ENCODE measurements at regions of chr6 and their contacts with region 1.

Region 1: DNA sequence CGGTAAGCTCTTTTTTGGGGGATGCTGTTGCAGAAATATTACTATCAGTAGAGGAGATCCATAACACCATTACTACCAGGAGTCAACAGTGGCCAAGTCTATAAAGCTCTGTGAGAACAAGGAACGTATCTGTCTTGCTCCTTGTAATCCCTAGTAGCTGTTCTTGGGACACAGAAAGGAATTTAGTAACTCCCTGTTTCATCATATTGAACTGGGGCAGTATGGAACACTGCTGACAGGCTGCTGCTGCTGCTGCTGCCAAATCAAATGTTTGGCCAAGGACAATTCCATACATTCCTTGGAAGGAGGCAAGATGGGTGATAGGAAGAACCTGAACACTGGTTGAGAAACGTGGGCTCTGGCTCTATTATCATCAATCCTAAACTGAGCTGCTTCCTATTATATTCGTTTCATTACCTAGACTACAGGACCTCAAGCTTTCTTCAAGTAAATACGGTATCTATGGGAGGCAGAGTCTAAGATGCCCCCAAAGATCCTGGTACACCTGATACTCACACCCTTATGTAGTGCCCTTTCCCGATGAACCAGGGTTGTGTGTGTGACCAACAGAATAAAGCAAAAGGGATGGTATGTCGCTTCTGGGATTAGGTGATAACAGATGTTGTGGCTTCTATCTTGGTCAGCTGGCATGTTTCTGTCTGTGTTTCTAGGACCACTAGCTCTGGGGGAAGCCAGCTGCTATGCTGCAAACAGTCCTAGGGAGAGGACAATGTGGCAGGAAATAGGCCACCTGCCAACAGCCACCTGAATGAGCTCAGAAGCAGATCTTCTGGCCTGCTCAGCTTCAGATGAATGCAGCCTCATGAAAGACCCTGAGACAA is 39.5 kb downstream of the ELOVL5 start:
- DNase-seq: peak; percentile 42
- ATAC-seq: peak; percentile 58
- H3K4me3 ChIP-seq: no peak overlapping the region
- H3K27ac ChIP-seq: peak overlapping the region; percentile 10
- H3K4me1 ChIP-seq: peaks cover 39% of the 10 kb centered on the region
- H3K27me3 ChIP-seq: no peaks in the 10 kb centered on the region
- CTCF ChIP-seq: no peak
- EP300 ChIP-seq: peak in 1 of 2 experiments; percentile 19; a peak in 1 of 4 replicates
- POLR2A ChIP-seq: peak; percentile 28; the same call in 1 of the 2 replicates
- RAD21 ChIP-seq: no peak

Region 2: DNA sequence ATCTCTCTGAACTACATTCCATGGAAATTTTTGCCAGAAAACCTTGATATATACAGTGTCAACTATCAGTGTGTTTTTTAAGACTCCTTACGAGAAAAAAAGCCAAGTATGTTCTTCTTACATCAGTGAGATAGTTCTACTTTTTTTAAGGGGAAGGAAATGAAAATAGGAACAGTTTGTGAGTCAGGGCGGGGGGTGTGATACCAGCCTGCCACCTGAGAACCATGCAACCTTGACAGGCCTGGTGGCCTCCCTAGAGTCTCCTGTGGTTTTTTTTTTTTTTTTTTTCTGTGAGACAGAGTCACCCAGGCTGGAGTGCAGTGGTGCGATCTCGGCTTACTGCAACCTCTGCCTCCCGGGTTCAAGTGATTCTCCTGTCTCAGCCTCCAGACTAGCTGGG is 64.3 kb before region 1 on chr6:
- CTCF ChIA-PET with region 1: no interaction called
- POLR2A ChIA-PET with region 1: no interaction called
- RAD21 ChIA-PET with region 1: interaction called, 3 read pairs
- SMC1A ChIA-PET with region 1: interaction called, 14 read pairs
- in situ Hi-C with region 1: no loop called
- intact Hi-C with region 1: no loop called
- DNase-seq: peak; percentile 72
- ATAC-seq: peak; percentile 87
- H3K4me3 ChIP-seq: no peak overlapping the region
- H3K27ac ChIP-seq: no peak overlapping the region
- H3K4me1 ChIP-seq: peaks cover 35% of the 10 kb centered on the region
- H3K27me3 ChIP-seq: no peaks in the 10 kb centered on the region
- CTCF ChIP-seq: no peak
- EP300 ChIP-seq: peak in 1 of 2 experiments; percentile 51; a peak in 1 of 4 replicates
- POLR2A ChIP-seq: no peak
- RAD21 ChIP-seq: no peak

Region 3: DNA sequence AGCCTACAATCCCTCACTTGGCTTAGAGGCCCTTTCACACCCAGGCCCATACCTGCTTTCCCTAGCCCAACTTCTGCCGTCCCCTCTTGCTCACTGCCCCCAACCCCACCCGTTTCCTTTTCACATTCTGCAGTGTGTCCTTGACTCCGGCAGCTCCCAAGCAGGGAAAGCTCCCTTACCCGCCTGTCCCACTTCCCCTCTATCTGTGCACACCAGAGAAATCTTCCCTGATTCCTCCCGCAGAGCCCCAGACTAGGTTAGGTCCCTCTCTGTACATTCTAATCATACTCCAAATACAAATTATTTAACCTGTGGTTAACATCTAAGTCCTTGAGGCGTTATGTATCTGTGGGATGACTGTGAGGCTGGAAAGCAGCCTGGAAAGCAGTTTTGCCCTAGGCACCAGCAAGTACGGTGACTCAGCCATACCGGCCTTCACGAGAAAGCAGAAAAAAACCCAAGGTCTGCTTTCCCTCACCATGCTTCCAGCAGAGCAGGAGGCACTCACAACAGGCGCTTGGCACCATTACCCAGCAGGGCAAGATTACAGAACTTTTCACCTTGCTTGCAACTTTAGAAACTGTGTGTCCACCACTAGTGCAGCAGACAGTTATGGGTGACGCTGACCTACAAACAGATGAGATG is 17.2 kb after region 1 on chr6:
- CTCF ChIA-PET with region 1: interaction called, 7 read pairs
- POLR2A ChIA-PET with region 1: interaction called, 16 read pairs
- RAD21 ChIA-PET with region 1: interaction called, 15 read pairs
- SMC1A ChIA-PET with region 1: interaction called, 52 read pairs
- in situ Hi-C with region 1: no loop called
- intact Hi-C with region 1: no loop called
- DNase-seq: no peak
- ATAC-seq: peak; percentile 8; the same call in 1 of the 3 replicates
- H3K4me3 ChIP-seq: no peak overlapping the region
- H3K27ac ChIP-seq: no peak overlapping the region
- H3K4me1 ChIP-seq: peaks cover 2% of the 10 kb centered on the region; the same call in 1 of the 2 replicates
- H3K27me3 ChIP-seq: no peaks in the 10 kb centered on the region
- CTCF ChIP-seq: no peak
- EP300 ChIP-seq: no peak
- POLR2A ChIP-seq: no peak
- RAD21 ChIP-seq: no peak

Region 4: DNA sequence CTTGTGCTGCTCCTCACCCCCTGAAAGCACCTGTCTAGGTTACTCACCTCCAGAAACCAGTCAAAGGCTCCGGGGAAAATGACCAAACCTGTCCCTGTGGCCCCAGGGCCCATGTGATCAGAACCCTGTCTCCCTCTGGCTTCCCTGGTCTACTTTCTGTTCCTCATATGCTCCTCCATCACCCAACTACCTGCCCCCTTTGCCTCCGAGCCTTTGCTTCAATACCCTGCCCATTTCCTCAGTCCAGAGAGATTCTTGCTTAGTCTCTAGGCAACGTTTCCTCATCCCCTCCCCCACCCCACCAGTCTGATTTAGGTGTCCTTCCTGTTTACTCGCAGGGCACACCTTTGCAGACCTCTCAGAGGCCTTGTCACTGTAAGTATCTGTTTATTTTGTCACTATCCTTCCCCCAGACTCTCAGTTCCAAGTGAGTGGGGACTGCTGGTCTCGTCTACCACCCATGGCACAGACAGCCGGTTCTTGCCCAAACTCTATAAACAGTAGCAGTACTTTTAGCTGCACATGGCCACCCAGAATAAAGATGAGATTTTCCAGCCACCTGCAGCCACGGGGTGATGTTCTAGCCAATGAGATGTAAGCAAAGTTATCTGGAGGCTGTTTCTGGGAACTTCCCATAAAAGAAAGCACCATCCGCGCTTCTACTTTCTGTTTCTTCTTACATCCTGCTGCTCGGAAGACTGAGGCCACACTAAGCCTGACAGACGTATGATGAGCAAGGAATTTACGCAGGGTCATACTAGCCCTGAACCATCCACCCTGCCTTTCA is 26.1 kb after region 1 on chr6:
- CTCF ChIA-PET with region 1: interaction called, 13 read pairs
- POLR2A ChIA-PET with region 1: interaction called, 22 read pairs
- RAD21 ChIA-PET with region 1: interaction called, 29 read pairs
- SMC1A ChIA-PET with region 1: interaction called, 135 read pairs
- in situ Hi-C with region 1: no loop called
- intact Hi-C with region 1: no loop called
- DNase-seq: peak; percentile 88
- ATAC-seq: peak; percentile 90
- H3K4me3 ChIP-seq: peak overlapping the region; percentile 72
- H3K27ac ChIP-seq: peak overlapping the region; percentile 85
- H3K4me1 ChIP-seq: peaks cover 22% of the 10 kb centered on the region
- H3K27me3 ChIP-seq: no peaks in the 10 kb centered on the region
- CTCF ChIP-seq: no peak
- EP300 ChIP-seq: peak in 1 of 2 experiments; percentile 68; a peak in 2 of 4 replicates
- POLR2A ChIP-seq: peak; percentile 34; the same call in 1 of the 2 replicates
- RAD21 ChIP-seq: no peak

Region 5: DNA sequence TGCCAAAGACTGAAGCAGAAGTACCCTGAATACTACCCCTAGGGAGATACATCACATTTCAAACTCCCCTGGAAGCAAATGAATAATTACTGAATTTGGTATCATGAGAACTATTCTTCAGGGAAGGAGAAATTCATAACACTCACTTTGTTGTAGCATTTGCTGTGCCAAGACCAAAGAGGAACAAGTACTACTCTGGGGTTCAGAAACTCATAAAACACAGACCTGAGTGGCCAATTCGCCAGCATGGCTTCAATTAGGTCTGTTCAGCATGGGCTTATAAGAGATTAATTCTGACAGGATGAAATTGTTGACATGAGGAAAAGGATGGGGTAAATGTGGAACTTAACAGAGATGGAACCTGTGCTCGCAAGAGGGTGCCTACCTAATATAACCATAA is 32.9 kb after region 1 on chr6:
- CTCF ChIA-PET with region 1: interaction called, 17 read pairs
- POLR2A ChIA-PET with region 1: interaction called, 32 read pairs
- RAD21 ChIA-PET with region 1: interaction called, 58 read pairs
- SMC1A ChIA-PET with region 1: interaction called, 135 read pairs
- in situ Hi-C with region 1: no loop called
- intact Hi-C with region 1: loop called (anchors 2 kb)
- DNase-seq: no peak
- ATAC-seq: peak; percentile 28
- H3K4me3 ChIP-seq: peak overlapping the region; percentile 5; the same call in 1 of the 2 replicates
- H3K27ac ChIP-seq: no peak overlapping the region
- H3K4me1 ChIP-seq: peaks cover 23% of the 10 kb centered on the region
- H3K27me3 ChIP-seq: no peaks in the 10 kb centered on the region
- CTCF ChIP-seq: no peak
- EP300 ChIP-seq: no peak
- POLR2A ChIP-seq: no peak
- RAD21 ChIP-seq: no peak

Region 6: GRCh38 chr6:53359072-53359842 is 50.0 kb after region 1 on chr6:
- CTCF ChIA-PET with region 1: interaction called, 3 read pairs
- POLR2A ChIA-PET with region 1: interaction called, 6 read pairs
- RAD21 ChIA-PET with region 1: interaction called, 20 read pairs
- SMC1A ChIA-PET with region 1: interaction called, 8 read pairs
- in situ Hi-C with region 1: no loop called
- intact Hi-C with region 1: no loop called
- DNase-seq: peak; percentile 78
- ATAC-seq: peak; percentile 95
- H3K4me3 ChIP-seq: peak overlapping the region; percentile 76
- H3K27ac ChIP-seq: peak overlapping the region; percentile 86
- H3K4me1 ChIP-seq: peaks cover 17% of the 10 kb centered on the region
- H3K27me3 ChIP-seq: no peaks in the 10 kb centered on the region
- CTCF ChIP-seq: no peak
- EP300 ChIP-seq: 0 out of 4 replicates have a peak, but pooled peaks of 1 of the 2 experiments have one; percentile 8
- POLR2A ChIP-seq: peak; percentile 94
- RAD21 ChIP-seq: no peak

Measured in GM12878 (cell line).